ENCODE measurements at regions of chr5 and their contacts with region 1.

Region 1: DNA sequence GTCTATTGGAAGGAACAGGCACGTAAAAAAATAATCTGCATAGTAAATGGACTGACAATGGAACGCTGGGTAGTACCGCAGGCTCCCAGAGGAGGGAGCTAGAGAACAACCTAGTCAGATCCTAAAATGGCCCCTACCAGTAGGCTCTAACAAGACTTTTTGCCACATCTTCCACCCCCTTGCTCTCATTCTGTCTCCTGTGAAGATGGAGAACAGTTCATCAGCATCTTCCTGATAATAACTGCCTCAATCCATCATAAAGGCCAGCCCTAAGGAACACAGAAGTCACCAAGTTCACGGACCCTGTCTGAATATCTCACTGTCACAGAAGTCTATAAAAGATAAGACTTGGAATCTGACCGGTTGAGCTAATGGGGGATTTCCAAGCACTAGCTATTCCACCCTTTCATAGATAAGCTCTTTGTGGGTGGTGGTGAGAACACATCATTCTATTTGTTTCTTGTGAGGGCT is 133.4 kb downstream of the SLC1A3 start:
- DNase-seq: peak; percentile 65 to 80
- ATAC-seq: peak; percentile 82 to 97 (median 93)
- H3K4me3 ChIP-seq: no peak overlapping the region
- H3K4me3 Mint-ChIP-seq: no peak overlapping the region
- H3K27ac ChIP-seq: no peak overlapping the region
- H3K27ac Mint-ChIP-seq: no peak overlapping the region
- H3K4me1 ChIP-seq: peaks cover 6% of the 10 kb centered on the region
- H3K4me1 Mint-ChIP-seq: peaks cover under 1 to 7% of the 10 kb centered on the region in 2 donors
- H3K27me3 ChIP-seq: no peaks in the 10 kb centered on the region
- H3K27me3 Mint-ChIP-seq: peaks cover 24 to 36% of the 10 kb centered on the region in 2 donors
- CTCF ChIP-seq: peak; percentile 67

Region 2: GRCh38 chr5:36535378-36535777 is 204.4 kb before region 1 on chr5:
- intact Hi-C with region 1: no loop called
- DNase-seq: no peak
- ATAC-seq: no peak
- H3K4me3 ChIP-seq: no peak overlapping the region
- H3K4me3 Mint-ChIP-seq: no peak overlapping the region
- H3K27ac ChIP-seq: no peak overlapping the region
- H3K27ac Mint-ChIP-seq: no peak overlapping the region
- H3K4me1 ChIP-seq: no peaks in the 10 kb centered on the region
- H3K4me1 Mint-ChIP-seq: no peaks in the 10 kb centered on the region
- H3K27me3 ChIP-seq: no peaks in the 10 kb centered on the region
- H3K27me3 Mint-ChIP-seq: no peaks in the 10 kb centered on the region
- CTCF ChIP-seq: no peak

Region 3: DNA sequence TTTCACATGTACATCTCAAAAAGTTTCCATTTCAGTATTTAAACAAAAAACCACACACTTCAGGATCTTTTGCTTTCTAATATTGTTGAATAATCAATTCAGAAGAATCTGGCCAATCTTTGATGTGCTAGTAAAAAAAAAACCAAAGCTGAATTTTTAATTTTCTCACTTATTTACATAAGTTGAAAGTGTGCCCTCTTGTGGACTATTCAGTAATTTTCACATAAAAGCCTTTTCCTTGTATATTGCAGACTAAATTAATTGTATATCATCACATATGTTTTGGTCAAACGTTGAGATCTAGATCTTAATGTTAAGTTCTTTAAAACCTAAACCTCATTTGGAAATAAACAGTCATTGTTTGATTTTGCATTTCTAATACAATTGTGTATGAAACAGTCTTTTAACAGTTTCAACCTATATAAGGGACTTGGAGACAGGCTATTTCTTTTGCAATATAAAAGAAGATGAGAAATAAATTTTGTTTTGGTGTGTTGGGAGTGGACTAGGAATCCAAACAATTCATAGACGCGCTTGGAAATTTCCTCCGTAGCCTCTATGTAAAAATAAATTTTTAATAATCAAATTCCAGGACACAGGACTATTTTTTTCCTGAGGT is 204.9 kb after region 1 on chr5:
- intact Hi-C with region 1: loop called (anchors 5 kb)
- DNase-seq: peak in 1 of 2 donors; percentile 77
- ATAC-seq: peak; percentile 37 to 58 (median 43)
- H3K4me3 ChIP-seq: no peak overlapping the region
- H3K4me3 Mint-ChIP-seq: no peak overlapping the region
- H3K27ac ChIP-seq: no peak overlapping the region
- H3K27ac Mint-ChIP-seq: no peak overlapping the region
- H3K4me1 ChIP-seq: no peaks in the 10 kb centered on the region
- H3K4me1 Mint-ChIP-seq: peaks cover 35 to 49% of the 10 kb centered on the region in 2 donors
- H3K27me3 ChIP-seq: no peaks in the 10 kb centered on the region
- H3K27me3 Mint-ChIP-seq: no peaks in the 10 kb centered on the region
- CTCF ChIP-seq: peak; percentile 79

Measured in natural killer cell (primary cell).